ENCODE measurements at regions of chr17 and their contacts with region 1.

Region 1: DNA sequence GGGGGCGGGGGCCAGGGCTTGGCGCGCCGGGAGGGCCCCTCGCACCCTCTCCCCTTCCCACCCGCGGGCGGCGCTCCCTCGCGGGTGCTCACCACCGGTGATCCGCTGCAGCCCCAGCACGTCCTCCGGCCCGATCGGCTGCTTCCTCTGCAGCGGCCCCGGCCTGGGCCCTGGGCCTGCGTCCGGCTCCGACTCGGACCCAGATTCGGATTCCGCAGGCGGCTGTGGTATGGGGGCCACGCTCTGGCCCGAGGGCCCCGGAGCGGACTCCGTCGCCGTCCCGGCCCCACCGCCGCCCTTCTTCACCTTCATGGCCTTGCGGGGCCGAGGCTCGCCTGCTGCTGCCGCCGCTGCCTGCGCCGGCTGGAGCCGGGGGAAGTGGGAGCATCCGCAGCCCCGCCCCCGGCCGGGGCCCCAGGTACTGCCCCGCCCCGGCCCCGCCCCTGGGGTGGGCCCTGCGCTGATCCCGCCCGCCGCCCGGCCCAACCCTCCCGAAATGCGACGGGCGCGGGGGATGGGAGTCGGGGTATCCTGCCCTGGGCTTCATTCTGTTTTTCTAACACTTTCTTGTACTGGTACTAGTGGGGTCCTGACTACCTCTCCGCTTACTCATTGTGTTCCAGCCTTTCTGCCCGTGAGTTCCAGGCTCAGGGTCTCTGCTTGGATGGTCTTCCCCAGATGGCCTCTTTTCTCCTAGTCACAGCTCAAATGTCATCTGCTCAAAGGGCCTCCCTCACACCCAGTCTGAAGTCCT is at the start of gene UNC119:
- H3K4me3 Mint-ChIP-seq: peak within 1 kb of the TSS; percentile 90
- H3K27ac Mint-ChIP-seq: peak within 1 kb of the TSS; percentile 81
- H3K4me1 Mint-ChIP-seq: peaks cover 53% of the 10 kb centered on the region
- H3K27me3 Mint-ChIP-seq: no peaks in the 10 kb centered on the region

Region 2: DNA sequence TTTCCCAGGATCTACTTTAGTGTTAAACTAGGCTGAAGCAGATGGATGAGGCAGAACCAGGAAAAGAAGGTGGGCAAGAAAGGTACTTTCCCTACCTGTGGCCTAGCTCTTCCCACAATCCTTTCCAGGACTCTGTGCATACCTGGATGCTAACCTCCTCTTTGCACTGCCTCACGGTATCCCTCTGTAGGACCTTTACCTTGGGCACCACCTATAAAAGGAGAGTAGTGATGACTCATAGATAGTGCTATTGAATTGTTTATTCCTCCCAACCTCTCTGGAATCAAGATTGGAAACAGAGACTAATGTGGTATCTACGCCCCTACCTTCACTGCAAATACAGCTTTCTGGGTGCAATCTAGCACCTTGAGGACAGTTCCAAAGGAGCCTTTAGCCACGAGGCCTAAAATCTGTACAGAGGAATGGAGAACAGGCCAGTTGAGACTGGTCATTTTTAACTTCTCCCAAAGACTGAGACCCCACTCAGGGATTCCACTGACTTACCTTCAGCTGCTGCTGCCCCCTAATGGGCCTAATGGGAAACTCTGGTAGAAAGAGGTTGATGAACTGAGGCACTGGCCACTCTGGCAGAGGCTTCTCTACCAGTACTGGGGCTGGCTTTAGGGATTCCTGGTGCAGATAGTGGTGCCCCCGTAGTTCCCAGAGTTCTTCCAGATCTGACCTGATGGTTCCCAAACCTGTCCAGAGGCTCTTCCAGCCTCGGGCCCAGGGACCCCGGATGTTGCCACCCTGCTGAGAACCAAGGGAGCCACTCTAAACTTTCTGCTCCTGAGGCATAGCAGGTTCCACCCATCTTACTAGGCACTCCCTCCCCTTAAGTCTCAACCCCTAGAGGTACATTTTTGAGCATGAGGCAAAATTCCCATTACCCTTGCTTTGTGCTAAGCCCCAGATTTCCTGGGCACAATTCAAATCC is 60.8 kb after region 1 on chr17:
- intact Hi-C with region 1: loop called (anchors 5 kb)
- H3K4me3 Mint-ChIP-seq: no peak overlapping the region
- H3K27ac Mint-ChIP-seq: peak overlapping the region; percentile 53
- H3K4me1 Mint-ChIP-seq: peaks cover 46% of the 10 kb centered on the region
- H3K27me3 Mint-ChIP-seq: no peaks in the 10 kb centered on the region

Measured in dendritic cell treated with granulocyte-macrophage colony-stimulating factor and Interleukin-4, amounts not matched to agents 40 ng/mL and 50 ng/mL, for 4 days (primary cell).